ENCODE measurements at regions of chr10 and their contacts with region 1.

Region 1: DNA sequence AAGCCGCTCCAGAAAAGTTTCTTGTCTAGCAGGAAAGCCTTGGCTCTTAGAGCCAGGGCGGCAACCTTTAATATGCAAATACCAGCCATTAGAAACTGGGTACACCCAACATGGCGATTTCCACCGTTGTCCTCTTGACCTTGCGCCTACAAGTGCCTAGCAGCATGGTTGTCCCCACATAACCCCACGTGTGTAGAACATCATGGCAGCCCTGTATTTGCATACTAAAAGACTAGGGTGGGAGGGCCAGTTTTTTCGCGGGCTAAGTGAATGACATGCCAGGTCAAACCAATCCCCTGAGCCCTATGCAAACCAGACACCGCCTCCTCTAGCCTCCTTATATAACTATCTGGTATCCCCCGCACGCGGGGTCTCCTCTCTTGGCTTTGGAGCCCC is 58.4 kb upstream of the FZD8 start:
- DNase-seq: no peak
- H3K4me3 ChIP-seq: no peak overlapping the region
- H3K4me3 Mint-ChIP-seq: peak overlapping the region; percentile 58
- H3K27ac Mint-ChIP-seq: no peak overlapping the region
- H3K4me1 ChIP-seq: peaks cover 8% of the 10 kb centered on the region
- H3K4me1 Mint-ChIP-seq: peaks cover 6% of the 10 kb centered on the region
- H3K27me3 ChIP-seq: no peaks in the 10 kb centered on the region; the same call in 1 of the 2 replicates
- H3K27me3 Mint-ChIP-seq: no peaks in the 10 kb centered on the region
- CTCF ChIP-seq: no peak

Region 2: DNA sequence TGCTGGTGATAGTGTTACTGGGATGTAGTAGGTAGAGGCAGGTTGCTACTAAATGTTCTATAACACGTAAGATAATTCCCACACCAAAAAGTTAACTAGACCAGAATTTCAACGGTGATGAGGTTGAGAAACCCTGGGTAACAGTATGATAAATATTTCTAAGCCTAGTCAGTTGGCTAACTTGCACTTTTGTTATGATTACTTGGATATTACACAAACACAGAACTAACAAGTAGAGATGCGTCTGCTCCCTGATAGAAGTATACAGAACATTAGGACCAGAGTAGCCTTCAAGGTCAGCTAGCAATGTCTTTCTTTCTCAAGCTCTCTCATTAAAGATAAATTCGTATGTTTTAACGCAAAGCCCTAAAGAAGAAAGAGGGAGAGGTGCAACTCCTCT is 27.9 kb after region 1 on chr10:
- CTCF ChIA-PET with region 1: no interaction called
- POLR2A ChIA-PET with region 1: interaction called, 10 read pairs
- intact Hi-C with region 1: no loop called
- DNase-seq: no peak
- H3K4me3 ChIP-seq: no peak overlapping the region
- H3K4me3 Mint-ChIP-seq: no peak overlapping the region
- H3K27ac Mint-ChIP-seq: no peak overlapping the region
- H3K4me1 ChIP-seq: no peaks in the 10 kb centered on the region
- H3K4me1 Mint-ChIP-seq: no peaks in the 10 kb centered on the region
- H3K27me3 ChIP-seq: no peaks in the 10 kb centered on the region
- H3K27me3 Mint-ChIP-seq: peaks cover 11% of the 10 kb centered on the region
- CTCF ChIP-seq: no peak